Heart left ventricle (tissue), 16 donors: ENCODE measurements at regions of chr1 and their contacts with region 1.

Region 1: DNA sequence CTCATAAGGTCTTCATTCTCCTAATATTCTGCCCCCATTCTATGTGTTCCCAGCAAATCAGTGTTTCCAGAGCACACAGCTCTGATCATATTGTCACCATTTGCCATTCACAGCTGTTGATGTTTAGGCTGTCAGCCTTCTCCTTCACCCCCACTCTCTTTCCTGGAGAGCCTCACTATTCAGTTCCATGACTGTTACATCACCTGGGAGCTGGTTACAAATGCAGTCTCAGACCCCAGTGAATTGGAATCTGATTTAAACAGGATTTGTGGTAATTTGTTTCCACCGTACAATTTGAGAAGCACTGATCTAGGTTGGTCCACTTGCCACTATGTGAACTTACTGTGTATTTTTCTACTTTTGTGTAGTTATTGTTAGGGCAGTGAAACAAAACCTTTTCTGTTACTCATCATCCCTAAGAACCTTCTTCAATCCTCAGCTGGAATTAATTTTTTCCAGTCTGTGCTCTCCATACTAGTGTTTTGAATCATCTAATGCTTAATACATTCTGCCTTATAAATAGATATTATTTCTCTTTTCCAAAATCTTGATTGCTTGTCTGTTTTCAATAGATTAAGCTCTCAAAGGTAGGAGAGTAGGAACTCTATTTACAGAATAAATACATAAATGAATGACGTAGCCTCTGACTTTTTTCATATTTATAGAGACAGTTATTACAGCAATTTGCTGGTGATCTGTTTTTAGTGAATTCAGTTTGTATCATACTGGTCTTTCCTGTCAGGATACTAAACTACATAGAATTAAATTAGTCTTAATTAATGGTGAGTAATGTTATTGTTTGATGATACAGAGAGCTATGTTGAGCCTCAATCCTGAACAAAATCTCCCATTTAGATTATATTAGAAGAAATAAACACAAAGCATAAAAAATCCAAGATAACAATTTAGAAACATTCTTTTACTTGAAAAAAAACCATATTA is 8.1 kb downstream of the SNX7 start:
- DNase-seq: no peak
- ATAC-seq: peak in 1 of 4 donors; percentile 32
- H3K4me3 ChIP-seq: no peak overlapping the region
- H3K27ac ChIP-seq: peak overlapping the region in 1 of 12 donors; percentile 9
- H3K4me1 ChIP-seq: peaks cover 0 to 24% (median 12%) of the 10 kb centered on the region in 12 donors
- H3K27me3 ChIP-seq: no peaks in the 10 kb centered on the region
- CTCF ChIP-seq: no peak
- POLR2A ChIP-seq: no peak

Region 2: GRCh38 chr1:98706173-98706843 is 36.7 kb after region 1 on chr1:
- intact Hi-C with region 1: loop called in 1 of 10 experiments (anchors 5 kb)
- DNase-seq: no peak
- ATAC-seq: no peak
- H3K4me3 ChIP-seq: no peak overlapping the region
- H3K27ac ChIP-seq: no peak overlapping the region
- H3K4me1 ChIP-seq: peaks cover 0 to 5% (median 0%) of the 10 kb centered on the region in 12 donors
- H3K27me3 ChIP-seq: no peaks in the 10 kb centered on the region
- CTCF ChIP-seq: no peak
- POLR2A ChIP-seq: no peak